MCF 10A (cell line): ENCODE measurements at regions of chr1 and their contacts with region 1.

Region 1: GRCh38 chr1:61318319-61319125 is 236.2 kb downstream of the NFIA start:
- DNase-seq: peak; percentile 82
- H3K4me3 Mint-ChIP-seq: peak overlapping the region; percentile 64
- H3K27ac Mint-ChIP-seq: peak overlapping the region; percentile 99
- H3K4me1 Mint-ChIP-seq: peaks cover 38% of the 10 kb centered on the region
- H3K27me3 Mint-ChIP-seq: no peaks in the 10 kb centered on the region
- CTCF ChIP-seq: no peak

Region 2: GRCh38 chr1:61287734-61288133 is 30.8 kb before region 1 on chr1:
- CTCF ChIA-PET with region 1: interaction called, 5 read pairs
- POLR2A ChIA-PET with region 1: interaction called, 16 read pairs
- intact Hi-C with region 1: loop called (anchors 2 kb)
- DNase-seq: peak; percentile 57
- H3K4me3 Mint-ChIP-seq: no peak overlapping the region
- H3K27ac Mint-ChIP-seq: peak overlapping the region; percentile 53
- H3K4me1 Mint-ChIP-seq: peaks cover 43% of the 10 kb centered on the region
- H3K27me3 Mint-ChIP-seq: no peaks in the 10 kb centered on the region
- CTCF ChIP-seq: no peak

Region 3: GRCh38 chr1:61579802-61580201 is 261.3 kb after region 1 on chr1:
- CTCF ChIA-PET with region 1: no interaction called
- POLR2A ChIA-PET with region 1: no interaction called
- intact Hi-C with region 1: no loop called
- DNase-seq: no peak
- H3K4me3 Mint-ChIP-seq: no peak overlapping the region
- H3K27ac Mint-ChIP-seq: no peak overlapping the region
- H3K4me1 Mint-ChIP-seq: no peaks in the 10 kb centered on the region
- H3K27me3 Mint-ChIP-seq: no peaks in the 10 kb centered on the region
- CTCF ChIP-seq: no peak